Caco-2 (cell line): ENCODE measurements at regions of chr12 and their contacts with region 1.

Region 1: DNA sequence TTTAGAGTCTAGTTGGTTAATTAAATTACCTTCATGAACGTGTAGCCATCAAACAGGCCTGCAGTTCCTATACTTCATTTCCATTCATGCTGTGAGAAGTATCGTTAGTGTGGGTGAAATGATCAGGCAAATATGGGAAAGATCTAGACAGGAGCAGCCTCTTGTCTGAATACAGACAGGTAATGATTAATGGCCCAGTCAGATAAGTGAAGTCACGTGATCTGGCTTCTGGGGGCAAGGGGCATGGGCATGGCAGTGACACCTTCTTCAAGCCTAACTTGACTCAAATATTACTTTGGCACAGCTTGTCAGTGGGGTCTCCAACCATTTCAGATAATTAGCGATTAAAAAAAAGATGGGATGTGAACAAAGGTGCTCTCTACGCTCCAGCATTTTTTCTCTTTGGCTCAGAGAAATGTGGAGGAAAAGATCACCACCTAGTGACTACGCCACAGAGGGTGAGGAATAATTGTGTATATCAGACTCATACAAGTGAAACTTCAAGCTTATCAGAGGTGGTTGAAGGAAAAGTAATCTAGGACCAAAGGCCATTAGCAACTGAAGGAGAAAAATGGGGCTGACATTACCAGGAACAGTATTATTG is 17.8 kb downstream of the GUCY2C start:
- DNase-seq: no peak
- H3K4me3 ChIP-seq: no peak overlapping the region
- H3K4me3 Mint-ChIP-seq: no peak overlapping the region
- H3K27ac Mint-ChIP-seq: no peak overlapping the region
- H3K4me1 ChIP-seq: peaks cover 14% of the 10 kb centered on the region
- H3K4me1 Mint-ChIP-seq: peaks cover 25% of the 10 kb centered on the region
- H3K27me3 ChIP-seq: no peaks in the 10 kb centered on the region
- H3K27me3 Mint-ChIP-seq: no peaks in the 10 kb centered on the region
- CTCF ChIP-seq: no peak

Region 2: DNA sequence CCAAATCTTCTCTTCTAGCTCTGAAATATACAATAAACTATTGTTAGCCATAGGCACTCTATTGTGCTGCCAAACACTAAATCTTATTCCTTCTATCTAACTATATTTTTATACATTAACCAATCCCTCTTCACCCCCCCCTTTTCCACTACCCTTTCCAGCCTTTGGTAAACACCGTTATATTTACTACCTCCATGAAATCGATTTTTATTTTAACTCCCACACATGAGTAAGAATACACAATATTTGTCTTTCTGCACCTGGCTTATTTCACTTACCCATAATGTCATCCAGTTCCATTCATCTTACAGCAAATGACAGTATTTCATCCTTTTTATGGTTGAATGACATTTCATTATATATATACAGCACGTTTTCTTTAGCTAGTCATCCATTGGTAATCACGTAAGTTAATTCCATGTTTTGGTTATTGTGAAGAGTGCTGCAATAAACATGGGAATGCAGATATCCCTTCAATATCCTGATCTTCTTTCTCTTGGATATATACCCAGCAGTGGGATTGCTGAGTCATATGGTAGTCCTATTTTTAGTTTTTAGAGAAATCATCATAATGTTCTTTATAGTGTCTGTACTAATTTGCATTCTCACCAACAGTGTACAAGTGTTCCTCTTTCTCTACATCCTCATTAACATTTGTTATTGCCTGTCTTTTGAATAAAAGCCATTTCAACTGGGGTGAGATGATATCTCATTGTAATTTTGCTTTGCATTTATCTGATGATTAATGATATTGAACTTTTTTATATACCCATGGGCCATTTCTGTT is 76.8 kb before region 1 on chr12:
- CTCF ChIA-PET with region 1: no interaction called
- POLR2A ChIA-PET with region 1: no interaction called
- intact Hi-C with region 1: no loop called
- DNase-seq: no peak
- H3K4me3 ChIP-seq: no peak overlapping the region
- H3K4me3 Mint-ChIP-seq: no peak overlapping the region
- H3K27ac Mint-ChIP-seq: no peak overlapping the region
- H3K4me1 ChIP-seq: no peaks in the 10 kb centered on the region
- H3K4me1 Mint-ChIP-seq: no peaks in the 10 kb centered on the region
- H3K27me3 ChIP-seq: no peaks in the 10 kb centered on the region
- H3K27me3 Mint-ChIP-seq: peaks cover 10% of the 10 kb centered on the region
- CTCF ChIP-seq: no peak

Region 3: DNA sequence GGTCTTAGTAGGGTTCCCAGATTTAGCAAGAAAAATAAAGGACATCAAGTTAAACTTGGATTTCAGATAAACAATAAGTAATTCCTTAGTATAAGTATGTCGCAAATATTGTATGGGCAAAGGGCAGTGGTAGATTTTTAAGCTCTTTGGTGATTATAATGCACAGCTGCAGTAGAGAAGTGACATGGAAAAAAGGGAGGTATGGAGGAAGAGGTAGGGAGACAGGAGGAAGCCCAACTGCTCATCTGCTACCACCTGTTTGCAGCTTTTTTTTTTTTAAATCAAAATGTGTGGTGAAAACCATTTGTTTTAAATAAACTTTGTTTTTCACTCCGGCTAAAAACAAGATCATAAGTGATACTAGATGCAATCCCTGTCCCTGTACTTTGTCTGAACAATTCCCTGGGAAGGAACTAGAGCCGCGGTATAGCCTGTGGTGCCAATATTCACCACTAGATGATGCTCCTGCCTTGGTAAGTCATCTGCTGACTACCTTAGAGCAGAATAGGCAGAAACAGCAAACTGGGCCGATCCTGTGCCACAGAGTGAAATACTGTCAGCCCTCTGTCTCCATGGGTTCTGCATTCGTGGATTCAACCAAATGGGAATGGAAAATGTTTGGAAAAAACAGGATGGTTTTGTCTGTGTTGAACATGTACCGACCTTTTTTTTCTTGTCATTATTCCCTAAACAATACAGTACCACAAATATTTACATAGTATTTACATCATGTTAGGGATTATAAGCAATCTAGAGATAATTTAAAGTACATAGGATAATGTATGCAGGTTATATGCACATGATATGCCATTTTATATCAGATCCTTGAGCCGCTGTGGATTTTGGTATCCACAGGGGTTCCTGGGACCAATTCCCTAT is 48.6 kb before region 1 on chr12:
- CTCF ChIA-PET with region 1: no interaction called
- POLR2A ChIA-PET with region 1: no interaction called
- intact Hi-C with region 1: no loop called
- DNase-seq: peak; percentile 82 to 89
- H3K4me3 ChIP-seq: no peak overlapping the region
- H3K4me3 Mint-ChIP-seq: no peak overlapping the region
- H3K27ac Mint-ChIP-seq: no peak overlapping the region
- H3K4me1 ChIP-seq: peaks cover 18% of the 10 kb centered on the region
- H3K4me1 Mint-ChIP-seq: peaks cover 27% of the 10 kb centered on the region
- H3K27me3 ChIP-seq: no peaks in the 10 kb centered on the region
- H3K27me3 Mint-ChIP-seq: no peaks in the 10 kb centered on the region
- CTCF ChIP-seq: peak; percentile 98 to 99

Region 4: GRCh38 chr12:14769969-14770495 is 91.4 kb after region 1 on chr12:
- CTCF ChIA-PET with region 1: no interaction called
- POLR2A ChIA-PET with region 1: interaction called, 3 read pairs
- intact Hi-C with region 1: loop called (anchors 1 kb)
- DNase-seq: peak; percentile 91 to 95
- H3K4me3 ChIP-seq: peak overlapping the region; percentile 96
- H3K4me3 Mint-ChIP-seq: peak overlapping the region; percentile 90
- H3K27ac Mint-ChIP-seq: peak overlapping the region; percentile 96
- H3K4me1 ChIP-seq: peaks cover 13% of the 10 kb centered on the region; the same call in 1 of the 2 replicates
- H3K4me1 Mint-ChIP-seq: peaks cover 20% of the 10 kb centered on the region
- H3K27me3 ChIP-seq: no peaks in the 10 kb centered on the region
- H3K27me3 Mint-ChIP-seq: no peaks in the 10 kb centered on the region
- CTCF ChIP-seq: peak; percentile 93 to 98

Region 5: DNA sequence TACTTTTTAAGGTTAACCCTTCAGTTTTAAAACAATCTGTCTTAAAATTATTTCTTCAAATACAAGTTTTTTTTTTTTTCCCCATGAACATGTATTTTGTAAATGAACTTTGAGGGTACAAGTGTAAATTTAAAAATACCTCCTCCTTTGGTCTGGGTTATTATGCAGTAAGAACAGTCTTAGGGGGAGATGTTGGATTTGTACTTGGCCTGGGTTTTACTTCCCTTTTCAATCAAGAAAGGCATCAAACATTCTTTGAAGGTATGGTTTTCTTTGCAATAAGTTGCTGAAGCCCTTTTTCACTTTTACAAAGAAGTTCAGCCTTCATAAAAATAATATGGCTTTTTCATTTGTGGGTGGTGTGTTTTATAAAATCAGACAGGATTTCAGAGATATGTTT is 104.1 kb after region 1 on chr12:
- CTCF ChIA-PET with region 1: no interaction called
- POLR2A ChIA-PET with region 1: no interaction called
- intact Hi-C with region 1: no loop called
- DNase-seq: no peak
- H3K4me3 ChIP-seq: no peak overlapping the region
- H3K4me3 Mint-ChIP-seq: no peak overlapping the region
- H3K27ac Mint-ChIP-seq: no peak overlapping the region
- H3K4me1 ChIP-seq: peaks cover 3% of the 10 kb centered on the region
- H3K4me1 Mint-ChIP-seq: peaks cover 9% of the 10 kb centered on the region
- H3K27me3 ChIP-seq: no peaks in the 10 kb centered on the region
- H3K27me3 Mint-ChIP-seq: no peaks in the 10 kb centered on the region
- CTCF ChIP-seq: no peak